Dorsolateral prefrontal cortex (tissue), 120 donors: ENCODE measurements at regions of chr1 and their contacts with region 1.

Region 1: GRCh38 chr1:175873290-175873935 is 130.0 kb upstream of the TNR start:
- DNase-seq: no peak
- H3K4me3 ChIP-seq: no peak overlapping the region
- H3K27ac ChIP-seq: peak overlapping the region in 1 of 59 donors; percentile 27
- H3K27me3 ChIP-seq: no peaks in the 10 kb centered on the region
- CTCF ChIP-seq: no peak

Region 2: DNA sequence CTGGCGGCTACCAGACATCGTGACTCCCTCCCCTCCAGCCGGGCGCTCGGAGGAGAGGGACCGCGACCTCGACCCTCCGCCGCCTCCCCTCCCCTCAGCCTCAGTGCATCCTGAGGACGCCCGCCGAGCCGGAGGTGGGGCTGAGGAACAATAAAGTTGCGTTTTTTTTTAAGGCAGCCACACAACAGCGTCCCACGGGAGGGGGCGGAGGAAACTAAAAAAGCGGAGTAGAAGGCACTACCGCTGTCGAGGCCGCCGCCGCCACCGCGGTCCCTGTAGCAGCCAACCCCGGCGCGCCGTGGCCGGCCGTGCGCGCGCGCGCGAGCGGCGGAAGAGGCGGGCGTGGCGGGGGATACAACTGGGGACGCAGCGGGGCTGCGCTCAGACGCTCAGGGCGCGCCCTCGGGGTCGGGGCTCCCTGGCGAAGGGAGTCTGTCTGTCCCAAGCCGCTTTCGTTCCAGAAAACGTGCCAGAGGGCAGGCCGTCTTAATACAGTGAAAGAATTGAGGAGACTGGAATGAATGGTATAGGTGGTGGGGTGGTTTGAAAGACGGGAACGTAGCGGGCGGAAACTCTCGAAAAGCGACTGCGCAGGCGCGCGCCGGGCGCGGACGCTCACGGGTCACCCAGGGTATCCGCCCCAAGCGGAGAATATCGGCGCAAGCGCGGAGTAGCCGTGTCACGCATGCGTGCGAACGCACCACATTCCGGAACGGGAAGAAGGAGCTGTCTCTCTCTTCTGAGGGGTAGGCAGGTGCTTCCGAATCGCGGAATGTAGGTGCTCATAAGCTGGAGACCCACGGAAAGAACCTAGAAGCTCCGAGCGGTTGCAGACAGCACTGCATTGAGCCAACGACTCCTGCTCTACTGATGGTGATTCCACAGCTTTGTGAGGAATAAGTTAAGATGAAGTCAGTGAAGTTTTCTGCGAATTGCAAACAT is 333.8 kb after region 1 on chr1 and contains the start of gene COP1:
- intact Hi-C with region 1: loop called in 1 of 2 experiments (anchors 10 kb)
- DNase-seq: peak; percentile 94 to 98 (median 96)
- H3K4me3 ChIP-seq: peak within 1 kb of the TSS; percentile 65 to 100 (median 95)
- H3K27ac ChIP-seq: peak within 1 kb of the TSS; percentile 53 to 98 (median 92)
- H3K27me3 ChIP-seq: no peaks in the 10 kb centered on the region
- CTCF ChIP-seq: peak in 34 of 56 donors; percentile 3 to 59 (median 26)
- total RNA-seq, gene COP1: 29.3 to 63.5 (median 42.5) TPM